Transverse colon (tissue), 4 donors: ENCODE measurements at regions of chr1 and their contacts with region 1.

Region 1: GRCh38 chr1:214224611-214225354 is 56.2 kb upstream of the SMYD2 start:
- DNase-seq: no peak
- H3K4me3 ChIP-seq: peak overlapping the region in 2 of 4 donors; percentile 22 to 26
- H3K27ac ChIP-seq: no peak overlapping the region
- H3K4me1 ChIP-seq: peaks cover 0 to 9% (median 0%) of the 10 kb centered on the region in 4 donors
- H3K27me3 ChIP-seq: peaks cover 8% of the 10 kb centered on the region
- CTCF ChIP-seq: no peak
- EP300 ChIP-seq: no peak
- POLR2A ChIP-seq: no peak

Region 2: GRCh38 chr1:214439352-214440119 is 214.8 kb after region 1 on chr1:
- in situ Hi-C with region 1: no loop called
- intact Hi-C with region 1: no loop called
- DNase-seq: peak; percentile 28
- H3K4me3 ChIP-seq: peak overlapping the region in 1 of 4 donors; percentile 25
- H3K27ac ChIP-seq: peak overlapping the region; percentile 12 to 46 (median 25)
- H3K4me1 ChIP-seq: peaks cover 11 to 33% (median 20%) of the 10 kb centered on the region in 4 donors
- H3K27me3 ChIP-seq: no peaks in the 10 kb centered on the region
- CTCF ChIP-seq: no peak
- EP300 ChIP-seq: no peak
- POLR2A ChIP-seq: no peak

Region 3: GRCh38 chr1:214764537-214764936 is 539.8 kb after region 1 on chr1:
- in situ Hi-C with region 1: loop called in 1 of 4 experiments (anchors 25 kb)
- intact Hi-C with region 1: no loop called
- DNase-seq: no peak
- H3K4me3 ChIP-seq: no peak overlapping the region
- H3K27ac ChIP-seq: no peak overlapping the region
- H3K4me1 ChIP-seq: no peaks in the 10 kb centered on the region
- H3K27me3 ChIP-seq: no peaks in the 10 kb centered on the region
- CTCF ChIP-seq: no peak
- EP300 ChIP-seq: no peak
- POLR2A ChIP-seq: no peak